ENCODE measurements at regions of chr20 and their contacts with region 1.

Region 1: DNA sequence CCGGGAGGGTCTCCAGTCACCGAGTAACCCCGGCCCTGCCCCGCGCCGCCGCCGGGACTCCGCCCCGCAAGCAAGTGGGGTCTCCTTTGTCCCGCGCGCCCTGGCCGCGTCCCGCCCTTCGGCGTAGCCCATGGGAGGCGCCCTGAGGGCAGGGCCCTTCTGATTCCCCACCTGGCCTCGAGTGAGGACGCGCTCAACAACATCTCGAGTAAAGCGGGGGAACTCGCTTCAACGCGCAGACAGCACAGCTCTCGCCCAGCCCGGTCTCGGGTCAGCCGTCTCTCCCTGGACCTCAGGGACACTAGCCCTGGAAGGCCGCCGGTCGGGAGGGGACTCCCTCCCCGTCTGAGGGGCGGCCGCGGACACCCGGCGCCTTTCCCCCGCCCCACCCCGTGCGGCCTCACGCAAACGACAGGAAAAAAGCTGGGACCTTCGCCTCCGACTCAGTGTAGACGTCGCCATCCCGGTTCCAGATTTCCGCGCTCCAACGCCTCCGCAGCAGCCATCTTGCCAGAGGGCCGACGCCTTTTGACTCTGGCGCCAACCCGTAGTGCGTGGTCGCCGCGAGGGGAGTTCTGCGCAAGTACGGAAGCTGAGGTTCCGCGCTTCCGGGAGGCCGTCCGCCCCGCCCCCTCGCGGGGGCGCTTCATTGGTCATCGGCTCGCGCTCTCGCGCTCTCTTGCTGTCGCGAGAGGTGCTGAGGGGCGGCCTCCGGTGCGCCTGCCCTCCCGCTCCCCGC is 412 bp upstream of the GID8 start:
- DNase-seq: peak; percentile 91 to 96
- H3K4me3 ChIP-seq: peak overlapping the region; percentile 89 to 98 (median 94)
- H3K27ac ChIP-seq: peak overlapping the region; percentile 95
- H3K4me1 ChIP-seq: peaks cover 3 to 21% (median 11%) of the 10 kb centered on the region in 4 experiments
- H3K27me3 ChIP-seq: no peaks in the 10 kb centered on the region
- CTCF ChIP-seq: no peak
- EP300 ChIP-seq: no peak
- POLR2A ChIP-seq: peak; percentile 92 to 95; a peak in 2 of 3 replicates
- RAD21 ChIP-seq: no peak

Region 2: DNA sequence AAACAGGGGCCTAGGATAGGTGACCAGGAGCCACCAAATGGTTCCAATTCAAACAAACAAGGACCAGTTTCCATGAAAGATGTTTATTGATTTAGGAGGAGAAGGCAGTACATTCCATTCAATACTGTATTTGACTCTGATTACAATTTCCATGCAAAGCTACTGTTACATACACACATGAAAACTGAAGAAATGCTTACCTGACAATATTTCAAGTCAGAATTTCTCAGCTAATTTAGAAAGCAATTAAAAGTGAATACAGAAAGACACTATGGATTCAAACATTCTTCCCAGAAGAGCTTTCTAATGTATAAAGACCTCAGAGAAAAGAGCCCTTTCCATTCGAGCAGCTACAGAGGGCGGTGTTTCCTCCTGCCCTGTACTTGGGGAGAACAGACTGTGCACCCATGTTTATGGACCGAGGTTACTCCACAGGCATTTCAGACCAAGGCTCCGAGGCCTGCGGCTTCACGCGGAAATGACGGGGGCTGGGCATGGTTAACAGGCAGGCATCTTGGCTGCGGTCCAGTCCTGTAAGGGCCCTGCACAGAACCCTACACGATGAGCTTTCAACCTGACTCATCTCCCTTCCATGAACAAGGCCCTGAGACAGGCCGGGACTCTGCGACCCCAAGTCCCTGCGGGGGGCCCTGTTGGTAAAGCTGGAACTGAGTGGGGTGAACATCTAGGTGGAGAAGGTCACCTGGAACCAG is 50.2 kb before region 1 on chr20:
- CTCF ChIA-PET with region 1: no interaction called
- POLR2A ChIA-PET with region 1: interaction called, 14 read pairs
- DNase-seq: no peak
- H3K4me3 ChIP-seq: no peak overlapping the region
- H3K27ac ChIP-seq: no peak overlapping the region
- H3K4me1 ChIP-seq: peaks cover 0 to 19% (median 9%) of the 10 kb centered on the region in 4 experiments; a peak in 5 of 7 replicates
- H3K27me3 ChIP-seq: no peaks in the 10 kb centered on the region
- CTCF ChIP-seq: no peak
- EP300 ChIP-seq: no peak
- POLR2A ChIP-seq: no peak
- RAD21 ChIP-seq: no peak

Region 3: GRCh38 chr20:62921119-62921687 is 16.3 kb before region 1 on chr20:
- CTCF ChIA-PET with region 1: interaction called, 22 read pairs
- POLR2A ChIA-PET with region 1: interaction called, 363 read pairs
- DNase-seq: no peak
- H3K4me3 ChIP-seq: no peak overlapping the region
- H3K27ac ChIP-seq: no peak overlapping the region
- H3K4me1 ChIP-seq: peaks cover 12 to 50% (median 41%) of the 10 kb centered on the region in 4 experiments; a peak in 6 of 7 replicates
- H3K27me3 ChIP-seq: no peaks in the 10 kb centered on the region
- CTCF ChIP-seq: peak; percentile 52 to 72 (median 71)
- EP300 ChIP-seq: no peak
- POLR2A ChIP-seq: no peak
- RAD21 ChIP-seq: peak; percentile 28 to 46; a peak in 2 of 4 replicates

Region 4: DNA sequence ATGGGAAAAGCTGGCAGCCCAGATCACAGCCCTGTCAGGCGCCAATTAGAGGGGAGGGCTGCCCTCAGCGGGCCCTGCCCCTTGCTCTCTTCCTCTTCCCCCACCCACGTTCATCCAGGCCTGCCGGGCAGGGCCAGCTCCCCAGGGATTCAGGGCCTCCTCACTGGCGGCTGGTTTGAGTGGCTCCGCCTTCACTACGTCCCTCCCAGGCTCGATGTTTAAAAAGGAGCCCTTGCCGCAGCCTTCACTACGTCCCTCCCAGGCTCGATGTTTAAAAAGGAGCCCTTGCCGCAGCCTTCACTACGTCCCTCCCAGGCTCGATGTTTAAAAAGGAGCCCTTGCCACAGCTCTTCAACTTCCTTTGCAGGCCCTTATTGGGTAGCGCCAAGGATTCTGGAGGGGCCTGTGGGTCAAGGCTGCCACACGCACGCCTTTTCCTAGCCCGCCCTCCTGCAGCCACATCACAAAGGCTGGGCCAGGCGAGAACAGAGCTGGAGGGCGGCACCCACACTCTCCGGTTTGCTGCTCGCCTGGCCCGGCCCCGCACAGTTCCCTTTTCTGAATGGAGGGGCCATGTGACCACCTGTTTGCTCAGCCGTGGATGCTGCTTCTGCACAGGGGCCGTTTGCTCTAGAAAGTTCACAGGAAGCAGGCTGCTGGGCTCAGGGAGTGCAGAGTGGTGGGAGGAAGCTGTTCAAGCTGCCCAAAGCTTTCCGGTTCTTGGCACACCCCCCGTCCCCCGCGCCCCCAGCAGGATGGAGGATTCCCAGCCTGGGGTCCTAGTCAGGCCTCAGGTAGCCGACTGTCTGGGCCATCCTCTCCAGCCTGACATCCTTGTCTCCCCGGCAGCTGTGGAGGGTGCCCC is 16.5 kb after region 1 on chr20:
- CTCF ChIA-PET with region 1: interaction called, 7 read pairs
- POLR2A ChIA-PET with region 1: interaction called, 59 read pairs
- DNase-seq: peak in 1 of 2 experiments; percentile 67
- H3K4me3 ChIP-seq: peak overlapping the region; percentile 1 to 61 (median 40); a peak in 6 of 8 replicates
- H3K27ac ChIP-seq: no peak overlapping the region
- H3K4me1 ChIP-seq: peaks cover 2 to 23% (median 17%) of the 10 kb centered on the region in 4 experiments
- H3K27me3 ChIP-seq: no peaks in the 10 kb centered on the region
- CTCF ChIP-seq: no peak
- EP300 ChIP-seq: no peak
- POLR2A ChIP-seq: no peak
- RAD21 ChIP-seq: no peak

Region 5: GRCh38 chr20:63023071-63023935 is 85.8 kb after region 1 on chr20:
- CTCF ChIA-PET with region 1: no interaction called
- POLR2A ChIA-PET with region 1: no interaction called
- DNase-seq: peak in 1 of 2 experiments; percentile 49
- H3K4me3 ChIP-seq: no peak overlapping the region
- H3K27ac ChIP-seq: no peak overlapping the region
- H3K4me1 ChIP-seq: peaks cover 0 to 8% (median 5%) of the 10 kb centered on the region in 4 experiments; a peak in 5 of 7 replicates
- H3K27me3 ChIP-seq: peaks cover 0 to 5% (median 2%) of the 10 kb centered on the region in 4 experiments; a peak in 4 of 7 replicates
- CTCF ChIP-seq: no peak
- EP300 ChIP-seq: no peak
- POLR2A ChIP-seq: no peak
- RAD21 ChIP-seq: no peak